ENCODE measurements at regions of chr10 and their contacts with region 1.

Region 1: GRCh38 chr10:87829986-87830729 is 12.1 kb upstream of the ATAD1 start:
- DNase-seq: no peak
- ATAC-seq: peak; percentile 93
- H3K4me3 Mint-ChIP-seq: no peak overlapping the region
- H3K27ac Mint-ChIP-seq: no peak overlapping the region
- H3K4me1 Mint-ChIP-seq: peaks cover 42% of the 10 kb centered on the region
- H3K27me3 Mint-ChIP-seq: no peaks in the 10 kb centered on the region

Region 2: GRCh38 chr10:87702260-87702972 is 127.7 kb before region 1 on chr10:
- CTCF ChIA-PET with region 1: no interaction called
- POLR2A ChIA-PET with region 1: interaction called, 11 read pairs
- intact Hi-C with region 1: no loop called
- DNase-seq: no peak
- ATAC-seq: no peak
- H3K4me3 Mint-ChIP-seq: no peak overlapping the region
- H3K27ac Mint-ChIP-seq: no peak overlapping the region
- H3K4me1 Mint-ChIP-seq: no peaks in the 10 kb centered on the region
- H3K27me3 Mint-ChIP-seq: peaks cover 2% of the 10 kb centered on the region

Region 3: DNA sequence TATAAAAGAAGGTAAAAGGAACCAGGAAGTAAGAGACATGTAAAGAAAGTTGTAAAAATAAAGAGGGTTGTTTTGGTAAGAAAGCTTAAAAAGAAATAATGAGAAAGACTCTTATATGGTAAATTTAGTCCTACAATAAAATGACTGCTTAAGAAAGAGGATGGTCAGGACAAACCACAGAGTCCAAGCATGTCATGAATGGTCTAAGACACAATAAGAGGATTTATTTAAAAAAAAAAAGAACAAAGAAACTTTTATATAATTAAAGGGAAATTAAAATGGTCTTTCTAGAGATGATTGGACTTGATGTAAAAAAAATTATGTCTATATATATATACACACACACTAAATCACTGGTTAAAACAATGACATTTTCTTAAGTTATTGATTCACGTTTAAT is 30.3 kb before region 1 on chr10:
- CTCF ChIA-PET with region 1: no interaction called
- POLR2A ChIA-PET with region 1: no interaction called
- intact Hi-C with region 1: loop called in 1 of 2 experiments (anchors 1 kb)
- DNase-seq: no peak
- ATAC-seq: no peak
- H3K4me3 Mint-ChIP-seq: no peak overlapping the region
- H3K27ac Mint-ChIP-seq: no peak overlapping the region
- H3K4me1 Mint-ChIP-seq: peaks cover 33% of the 10 kb centered on the region
- H3K27me3 Mint-ChIP-seq: no peaks in the 10 kb centered on the region

Measured in activated CD4-positive, alpha-beta T cell treated with anti-CD3 and anti-CD28 coated beads for 36 hours (primary cell).